ENCODE measurements at regions of chr10 and their contacts with region 1.

Region 1: DNA sequence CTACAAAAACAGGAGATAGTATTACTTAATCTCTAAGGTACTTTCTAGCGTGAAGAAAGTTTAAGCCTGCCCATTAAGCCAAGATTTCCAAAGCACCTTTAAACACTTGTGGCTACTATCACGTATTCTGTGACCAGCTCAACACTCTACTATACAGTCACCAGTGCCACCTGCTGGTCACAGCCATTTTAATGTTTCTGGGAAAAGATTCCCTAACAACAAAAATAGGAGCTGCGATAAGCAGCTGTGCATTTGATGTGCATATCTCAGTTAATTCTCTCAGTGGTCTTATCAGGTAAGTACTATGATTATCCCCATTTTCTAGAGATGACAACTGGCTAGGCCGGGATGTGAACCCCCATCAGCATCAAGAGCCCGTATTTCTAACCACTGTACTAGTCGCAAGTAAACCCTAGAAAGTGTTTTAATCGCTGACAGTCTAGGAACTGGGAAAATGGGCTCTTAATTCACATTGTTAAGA is 860 bp downstream of the SEC31B start:
- DNase-seq: peak in 1 of 2 donors; percentile 39
- ATAC-seq: peak; percentile 61 to 78 (median 68)
- H3K4me3 ChIP-seq: peak overlapping the region; percentile 72
- H3K27ac ChIP-seq: peak overlapping the region; percentile 70
- H3K4me1 ChIP-seq: peaks cover 28% of the 10 kb centered on the region
- H3K27me3 ChIP-seq: no peaks in the 10 kb centered on the region
- CTCF ChIP-seq: peak; percentile 73

Region 2: DNA sequence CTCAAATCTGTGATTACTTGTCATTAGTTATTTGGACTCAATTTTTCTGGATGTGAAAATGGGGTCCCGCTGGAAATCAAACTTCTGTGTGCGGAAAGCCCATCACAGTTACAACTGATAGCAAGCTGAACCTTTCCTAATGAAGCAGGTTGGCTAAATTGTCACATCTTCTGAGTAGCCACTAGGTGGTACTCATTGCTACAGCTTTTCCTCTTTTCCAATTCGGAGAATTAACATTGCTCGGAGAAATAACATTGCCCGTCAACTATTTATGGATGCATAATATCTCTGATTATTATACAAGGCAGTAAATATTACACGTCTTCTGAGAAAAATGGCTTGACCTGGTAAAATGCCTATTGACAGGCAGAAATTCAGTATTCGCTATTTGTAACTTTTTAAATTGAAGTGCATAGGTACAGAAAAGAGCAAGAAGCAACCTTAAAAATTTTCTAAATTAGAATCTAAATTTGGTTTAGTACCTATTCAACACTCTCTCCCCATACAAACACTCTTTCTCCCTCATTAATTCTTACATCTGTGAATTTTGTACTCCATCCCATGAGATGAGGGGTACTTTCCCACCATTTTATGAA is 215.0 kb before region 1 on chr10:
- intact Hi-C with region 1: loop called in 1 of 2 experiments (anchors 10 kb)
- DNase-seq: no peak
- ATAC-seq: peak in 2 of 4 donors; percentile 34 to 69
- H3K4me3 ChIP-seq: no peak overlapping the region
- H3K27ac ChIP-seq: no peak overlapping the region
- H3K4me1 ChIP-seq: no peaks in the 10 kb centered on the region
- H3K27me3 ChIP-seq: peaks cover 0 to 18% (median 5%) of the 10 kb centered on the region in 3 donors
- CTCF ChIP-seq: peak; percentile 56

Region 3: GRCh38 chr10:100338434-100339036 is 180.3 kb before region 1 on chr10:
- intact Hi-C with region 1: loop called (anchors 2 to 5 kb)
- DNase-seq: peak; percentile 71 to 86
- ATAC-seq: peak; percentile 66 to 85 (median 74)
- H3K4me3 ChIP-seq: no peak overlapping the region
- H3K27ac ChIP-seq: no peak overlapping the region
- H3K4me1 ChIP-seq: peaks cover 15% of the 10 kb centered on the region
- H3K27me3 ChIP-seq: no peaks in the 10 kb centered on the region
- CTCF ChIP-seq: peak; percentile 95

Region 4: GRCh38 chr10:100433253-100434240 is 85.3 kb before region 1 on chr10:
- intact Hi-C with region 1: loop called in 1 of 2 experiments (anchors 2 kb)
- DNase-seq: peak; percentile 88 to 91
- ATAC-seq: peak; percentile 92 to 97 (median 95)
- H3K4me3 ChIP-seq: no peak overlapping the region
- H3K27ac ChIP-seq: no peak overlapping the region
- H3K4me1 ChIP-seq: peaks cover under 1% of the 10 kb centered on the region
- H3K27me3 ChIP-seq: peaks cover 0 to 4% (median 0%) of the 10 kb centered on the region in 3 donors
- CTCF ChIP-seq: peak; percentile 100

Region 5: GRCh38 chr10:100481462-100482081 is 37.2 kb before region 1 on chr10:
- intact Hi-C with region 1: loop called in 1 of 2 experiments (anchors 5 kb)
- DNase-seq: peak; percentile 79 to 86
- ATAC-seq: peak; percentile 94 to 98 (median 96)
- H3K4me3 ChIP-seq: peak overlapping the region; percentile 67
- H3K27ac ChIP-seq: no peak overlapping the region
- H3K4me1 ChIP-seq: peaks cover 12% of the 10 kb centered on the region
- H3K27me3 ChIP-seq: peaks cover 0 to 25% (median 0%) of the 10 kb centered on the region in 3 donors
- CTCF ChIP-seq: no peak

Measured in psoas muscle (tissue), 8 donors.